ENCODE measurements at regions of chr3 and their contacts with region 1.

Region 1: DNA sequence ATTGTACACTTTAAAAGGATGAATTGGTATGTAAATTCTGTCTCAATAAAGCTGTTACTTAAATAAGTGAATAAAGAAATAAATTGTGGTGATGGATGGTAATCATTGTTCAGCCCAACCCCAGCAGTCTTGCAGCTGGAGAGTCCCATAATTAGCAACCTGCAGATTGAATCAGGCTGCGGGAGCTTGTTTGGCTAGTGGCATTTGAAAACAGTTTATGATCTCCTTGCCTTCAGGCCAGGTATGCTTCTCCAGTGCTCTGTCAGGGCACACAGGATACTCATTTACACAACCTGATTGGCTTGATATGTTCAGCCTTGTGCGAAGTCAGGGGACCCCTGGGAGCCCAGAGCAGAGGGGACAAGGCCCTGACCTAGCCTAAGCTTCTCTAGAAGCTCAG is 16.5 kb upstream of the TSEN2 start:
- DNase-seq: no peak
- ATAC-seq: no peak
- H3K4me3 ChIP-seq: no peak overlapping the region
- H3K27ac ChIP-seq: no peak overlapping the region
- H3K4me1 ChIP-seq: no peaks in the 10 kb centered on the region
- H3K27me3 ChIP-seq: no peaks in the 10 kb centered on the region
- CTCF ChIP-seq: no peak

Region 2: DNA sequence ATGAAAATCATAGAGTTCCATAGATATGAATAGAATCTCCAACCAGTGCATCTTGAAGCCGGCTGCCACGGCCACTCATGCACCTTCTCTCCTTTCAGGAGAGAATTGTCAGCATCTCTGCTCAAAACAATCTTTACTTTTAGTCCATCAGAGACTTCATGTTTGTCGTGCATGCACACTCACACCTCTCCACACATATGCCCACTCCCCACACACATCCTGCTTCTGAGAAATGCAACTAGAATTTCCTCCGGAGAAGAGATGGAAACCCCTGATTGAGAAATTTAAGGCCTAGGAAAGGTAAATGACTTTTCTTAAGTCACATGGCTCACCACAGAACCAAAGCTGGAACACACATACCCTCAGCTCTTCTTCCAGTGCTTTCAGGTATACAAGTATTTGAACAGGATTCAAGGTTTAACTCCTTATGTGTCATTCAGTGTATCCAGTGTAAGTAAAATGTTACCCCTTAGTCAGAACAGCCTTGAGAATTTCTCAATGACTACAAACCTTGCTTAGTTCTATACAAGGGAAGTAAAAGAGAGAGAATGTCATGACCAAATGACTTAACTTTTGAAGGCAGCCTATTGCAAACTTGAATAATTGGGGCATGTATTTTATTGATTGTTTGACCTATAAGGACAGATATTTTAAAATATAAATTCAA is 52.6 kb before region 1 on chr3:
- intact Hi-C with region 1: loop called in 1 of 2 experiments (anchors 5 kb)
- DNase-seq: no peak
- ATAC-seq: no peak
- H3K4me3 ChIP-seq: no peak overlapping the region
- H3K27ac ChIP-seq: no peak overlapping the region
- H3K4me1 ChIP-seq: no peaks in the 10 kb centered on the region
- H3K27me3 ChIP-seq: peaks cover 0 to 3% (median 0%) of the 10 kb centered on the region in 3 donors
- CTCF ChIP-seq: no peak

Region 3: DNA sequence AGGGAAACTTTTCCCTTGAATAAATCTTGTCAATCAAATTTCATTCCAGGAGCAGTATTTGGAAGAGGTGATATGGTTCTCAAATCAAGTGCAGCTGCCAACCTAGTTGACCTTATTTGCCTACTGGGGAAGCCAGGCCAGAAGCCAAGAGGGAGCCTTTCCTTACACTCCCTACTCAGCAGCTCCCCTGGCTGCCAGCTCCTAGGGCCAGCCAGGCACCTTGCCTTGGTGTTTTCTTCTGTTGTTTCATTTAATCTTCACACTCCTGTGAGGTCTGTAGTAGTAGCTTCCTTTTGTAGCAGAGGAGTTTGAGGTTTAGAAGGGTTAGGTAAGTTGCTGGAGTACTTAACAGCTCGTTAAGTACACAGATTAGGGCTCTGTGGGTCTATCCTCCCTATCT is 55.0 kb after region 1 on chr3:
- intact Hi-C with region 1: no loop called
- DNase-seq: peak; percentile 24 to 77
- ATAC-seq: peak; percentile 85 to 95 (median 88)
- H3K4me3 ChIP-seq: no peak overlapping the region
- H3K27ac ChIP-seq: peak overlapping the region; percentile 60
- H3K4me1 ChIP-seq: peaks cover 18% of the 10 kb centered on the region
- H3K27me3 ChIP-seq: no peaks in the 10 kb centered on the region
- CTCF ChIP-seq: peak; percentile 50

Region 4: DNA sequence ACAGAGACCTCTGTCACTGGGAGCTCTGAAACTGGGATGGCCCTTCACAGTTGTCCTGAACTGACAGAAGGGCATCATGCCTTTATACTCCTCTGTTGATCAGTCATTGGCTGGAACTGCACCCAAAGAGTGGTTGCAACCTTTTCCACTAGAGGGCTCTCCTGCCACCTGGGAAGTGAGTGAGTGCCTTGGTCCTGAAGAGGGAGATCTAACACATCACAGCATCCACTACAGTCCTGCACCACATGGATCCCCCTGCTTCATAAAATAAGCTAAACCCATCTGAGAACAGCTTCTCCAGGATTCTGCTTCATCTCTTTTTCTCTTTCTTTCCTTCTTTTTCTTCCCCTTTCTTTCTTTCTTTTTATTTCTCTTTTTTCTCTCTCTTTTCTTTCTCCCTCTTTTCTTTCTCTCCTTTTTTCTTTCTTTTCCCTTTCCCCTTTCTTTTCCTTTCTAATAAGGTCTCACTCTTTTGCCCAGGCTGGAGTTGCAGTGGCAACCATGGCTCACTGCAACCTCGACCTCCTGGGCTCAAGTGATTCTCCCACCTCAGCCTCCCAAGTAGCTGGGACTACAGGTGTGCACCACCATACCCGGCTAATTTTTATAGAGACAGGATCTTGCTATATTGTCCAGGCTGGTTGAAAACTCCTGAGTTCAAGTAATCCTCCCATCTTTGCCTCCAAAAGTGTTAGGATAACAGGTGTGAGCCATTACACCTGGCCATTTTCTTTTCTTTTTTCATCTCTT is 238.9 kb after region 1 on chr3:
- intact Hi-C with region 1: no loop called
- DNase-seq: peak; percentile 31 to 58
- ATAC-seq: peak; percentile 84 to 93 (median 87)
- H3K4me3 ChIP-seq: no peak overlapping the region
- H3K27ac ChIP-seq: peak overlapping the region; percentile 21
- H3K4me1 ChIP-seq: peaks cover 11% of the 10 kb centered on the region
- H3K27me3 ChIP-seq: no peaks in the 10 kb centered on the region
- CTCF ChIP-seq: peak; percentile 80